Activated naive CD4-positive, alpha-beta T cell treated with anti-CD3 and anti-CD28 coated beads for 36 hours (primary cell): ENCODE measurements at regions of chr16 and their contacts with region 1.

Region 1: DNA sequence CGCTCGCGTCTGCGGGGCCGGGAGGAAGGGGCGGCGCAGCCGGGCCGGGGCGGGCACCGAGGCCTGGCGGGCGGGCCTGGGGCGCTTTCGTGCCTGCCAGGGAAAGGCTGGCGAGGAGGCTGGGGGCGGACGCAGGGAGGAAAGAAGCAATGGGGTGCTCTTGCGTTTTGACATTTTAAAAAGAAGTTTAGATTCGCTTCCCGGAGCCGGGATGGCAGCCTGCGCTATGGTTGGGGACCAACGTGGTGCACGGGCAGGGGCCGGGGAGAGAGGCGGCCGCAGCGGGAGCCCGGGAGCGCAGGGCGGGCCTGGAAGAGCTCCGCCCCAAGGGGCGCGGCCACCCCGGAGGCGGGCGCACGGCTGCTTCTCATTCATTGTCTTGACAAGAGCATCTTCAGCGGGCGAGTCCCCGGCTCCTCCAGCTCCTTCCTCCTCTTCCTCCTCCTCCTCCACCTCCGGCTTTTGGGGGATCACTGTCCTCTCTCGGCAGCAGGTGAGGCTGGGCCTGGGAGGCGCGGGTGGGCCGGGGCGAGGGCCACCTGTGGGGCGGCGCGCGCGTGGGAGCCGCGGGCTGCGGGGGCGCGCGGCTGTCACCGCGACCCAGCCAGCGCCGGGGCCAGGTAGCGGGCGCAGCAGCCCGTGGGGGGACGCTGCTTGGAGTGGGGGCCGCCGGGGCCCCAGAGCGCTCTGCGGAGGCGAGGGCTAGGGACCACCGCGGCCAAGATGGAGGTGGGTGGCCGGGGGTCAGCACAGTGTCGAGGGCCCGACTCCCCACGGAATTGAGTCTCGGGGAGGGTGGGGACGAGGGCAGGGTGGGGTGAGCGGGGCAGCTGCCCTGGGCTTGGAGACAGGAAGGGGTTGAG is at the start of gene CORO1A:
- DNase-seq: peak; percentile 90
- H3K4me3 Mint-ChIP-seq: peak within 1 kb of the TSS; percentile 100
- H3K27ac Mint-ChIP-seq: peak within 1 kb of the TSS; percentile 100
- H3K4me1 Mint-ChIP-seq: peaks cover 22% of the 10 kb centered on the region
- H3K27me3 Mint-ChIP-seq: no peaks in the 10 kb centered on the region
- total RNA-seq, gene CORO1A: 855 to 866 TPM

Region 2: GRCh38 chr16:30112197-30113030 is 71.0 kb before region 1 on chr16:
- CTCF ChIA-PET with region 1: interaction called, 10 read pairs
- intact Hi-C with region 1: no loop called
- DNase-seq: peak; percentile 78
- H3K4me3 Mint-ChIP-seq: no peak overlapping the region
- H3K27ac Mint-ChIP-seq: peak overlapping the region; percentile 46
- H3K4me1 Mint-ChIP-seq: peaks cover 14% of the 10 kb centered on the region
- H3K27me3 Mint-ChIP-seq: no peaks in the 10 kb centered on the region